Aorta (tissue), 5 donors: ENCODE measurements at regions of chr14 and their contacts with region 1.

Region 1: GRCh38 chr14:73472185-73473114 is 14.1 kb upstream of the NUMB start:
- DNase-seq: no peak
- ATAC-seq: peak; percentile 75
- H3K4me3 ChIP-seq: no peak overlapping the region
- H3K27ac ChIP-seq: no peak overlapping the region
- H3K4me1 ChIP-seq: no peaks in the 10 kb centered on the region
- H3K27me3 ChIP-seq: no peaks in the 10 kb centered on the region

Region 2: GRCh38 chr14:73173092-73173735 is 299.2 kb before region 1 on chr14:
- intact Hi-C with region 1: loop called (anchors 10 kb)
- DNase-seq: no peak
- ATAC-seq: no peak
- H3K4me3 ChIP-seq: no peak overlapping the region
- H3K27ac ChIP-seq: no peak overlapping the region
- H3K4me1 ChIP-seq: no peaks in the 10 kb centered on the region
- H3K27me3 ChIP-seq: no peaks in the 10 kb centered on the region

Region 3: GRCh38 chr14:73295198-73295796 is 177.2 kb before region 1 on chr14:
- intact Hi-C with region 1: loop called (anchors 1 to 2 kb)
- DNase-seq: no peak
- ATAC-seq: no peak
- H3K4me3 ChIP-seq: no peak overlapping the region
- H3K27ac ChIP-seq: no peak overlapping the region
- H3K4me1 ChIP-seq: no peaks in the 10 kb centered on the region
- H3K27me3 ChIP-seq: no peaks in the 10 kb centered on the region

Region 4: GRCh38 chr14:73526569-73526968 is 54.1 kb after region 1 on chr14:
- intact Hi-C with region 1: no loop called
- DNase-seq: no peak
- ATAC-seq: peak; percentile 19
- H3K4me3 ChIP-seq: no peak overlapping the region
- H3K27ac ChIP-seq: no peak overlapping the region
- H3K4me1 ChIP-seq: no peaks in the 10 kb centered on the region
- H3K27me3 ChIP-seq: no peaks in the 10 kb centered on the region